Gastrocnemius medialis (tissue), 4 donors: ENCODE measurements at regions of chr17 and their contacts with region 1.

Region 1: GRCh38 chr17:46082257-46082656 is 83.2 kb downstream of the STH start:
- DNase-seq: no peak
- ATAC-seq: no peak
- H3K4me3 ChIP-seq: no peak overlapping the region
- H3K27ac ChIP-seq: peak overlapping the region in 3 of 4 donors; percentile 18 to 39 (median 32)
- H3K4me1 ChIP-seq: peaks cover 63 to 79% of the 10 kb centered on the region in 2 donors
- H3K27me3 ChIP-seq: no peaks in the 10 kb centered on the region
- CTCF ChIP-seq: no peak
- POLR2A ChIP-seq: no peak

Region 2: GRCh38 chr17:44894642-44895041 is 1187.6 kb before region 1 on chr17:
- in situ Hi-C with region 1: no loop called
- intact Hi-C with region 1: no loop called
- DNase-seq: no peak
- ATAC-seq: no peak
- H3K4me3 ChIP-seq: no peak overlapping the region
- H3K27ac ChIP-seq: no peak overlapping the region
- H3K4me1 ChIP-seq: peaks cover 15 to 17% of the 10 kb centered on the region in 2 donors
- H3K27me3 ChIP-seq: no peaks in the 10 kb centered on the region
- CTCF ChIP-seq: no peak
- POLR2A ChIP-seq: no peak

Region 3: GRCh38 chr17:45345554-45346215 is 736.6 kb before region 1 on chr17:
- in situ Hi-C with region 1: no loop called
- intact Hi-C with region 1: no loop called
- DNase-seq: peak in 1 of 2 donors; percentile 35
- ATAC-seq: peak; percentile 61 to 72
- H3K4me3 ChIP-seq: no peak overlapping the region
- H3K27ac ChIP-seq: peak overlapping the region in 3 of 4 donors; percentile 7 to 30 (median 7)
- H3K4me1 ChIP-seq: no peaks in the 10 kb centered on the region
- H3K27me3 ChIP-seq: no peaks in the 10 kb centered on the region
- CTCF ChIP-seq: no peak
- POLR2A ChIP-seq: no peak

Region 4: DNA sequence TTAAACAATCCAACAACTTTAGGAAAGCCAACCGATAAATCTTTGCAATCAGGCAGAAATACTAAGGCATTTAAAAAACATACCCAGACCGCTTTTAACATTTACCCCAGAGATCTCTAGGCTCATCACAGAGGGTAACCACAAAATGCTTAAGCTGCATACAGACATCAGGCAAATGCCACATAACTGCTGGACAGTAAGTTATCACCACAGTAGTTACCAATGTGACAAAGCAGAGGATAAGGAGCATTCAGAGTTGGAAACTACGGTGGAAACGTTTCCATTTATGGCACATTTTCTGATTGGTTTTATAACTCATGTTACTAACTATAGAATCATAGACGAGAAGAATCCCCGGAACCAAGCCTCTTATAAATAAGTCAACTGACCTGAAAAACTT is 33.4 kb after region 1 on chr17:
- in situ Hi-C with region 1: no loop called
- intact Hi-C with region 1: loop called (anchors 5 kb)
- DNase-seq: no peak
- ATAC-seq: peak in 1 of 2 donors; percentile 39
- H3K4me3 ChIP-seq: no peak overlapping the region
- H3K27ac ChIP-seq: peak overlapping the region in 3 of 4 donors; percentile 27 to 45 (median 35)
- H3K4me1 ChIP-seq: peaks cover 65 to 67% of the 10 kb centered on the region in 2 donors
- H3K27me3 ChIP-seq: no peaks in the 10 kb centered on the region
- CTCF ChIP-seq: no peak
- POLR2A ChIP-seq: peak in 1 of 2 donors; percentile 3